Psoas muscle (tissue), 8 donors: ENCODE measurements at regions of chr7 and their contacts with region 1.

Region 1: DNA sequence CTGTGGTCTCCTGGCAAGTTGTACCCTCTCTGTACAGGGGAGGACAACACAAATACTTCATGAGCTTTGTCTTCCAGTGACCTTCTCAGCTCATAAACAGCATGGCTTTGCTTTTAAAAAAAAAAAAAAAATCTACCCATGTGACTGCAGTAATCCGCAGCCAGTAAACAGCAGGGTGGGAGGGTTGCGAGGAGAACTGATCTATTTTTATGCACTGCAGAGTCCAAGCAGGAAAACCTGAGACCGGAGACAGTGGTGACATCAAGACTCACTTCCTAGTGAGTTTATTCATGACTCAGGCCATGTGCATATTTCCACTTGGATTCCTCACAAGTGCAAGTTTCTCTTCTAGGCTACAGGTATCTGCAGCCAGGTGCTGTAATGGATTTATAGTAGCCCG is 127.9 kb downstream of the NRF1 start:
- DNase-seq: peak; percentile 25 to 69
- ATAC-seq: peak; percentile 88 to 92 (median 90)
- H3K4me3 ChIP-seq: no peak overlapping the region
- H3K27ac ChIP-seq: peak overlapping the region; percentile 86
- H3K4me1 ChIP-seq: peaks cover 42% of the 10 kb centered on the region
- H3K27me3 ChIP-seq: no peaks in the 10 kb centered on the region
- CTCF ChIP-seq: no peak

Region 2: GRCh38 chr7:129797214-129797789 is 57.9 kb after region 1 on chr7:
- intact Hi-C with region 1: loop called in 1 of 2 experiments (anchors 5 kb)
- DNase-seq: no peak
- ATAC-seq: no peak
- H3K4me3 ChIP-seq: no peak overlapping the region
- H3K27ac ChIP-seq: peak overlapping the region; percentile 74
- H3K4me1 ChIP-seq: peaks cover 14% of the 10 kb centered on the region
- H3K27me3 ChIP-seq: no peaks in the 10 kb centered on the region
- CTCF ChIP-seq: no peak